Activated CD4-positive, alpha-beta T cell treated with anti-CD3 and anti-CD28 coated beads for 36 hours (primary cell): ENCODE measurements at regions of chr17 and their contacts with region 1.

Region 1: GRCh38 chr17:65055348-65056261 is 935 bp downstream of the GNA13 start:
- DNase-seq: peak; percentile 76
- ATAC-seq: peak; percentile 55
- H3K4me3 Mint-ChIP-seq: peak overlapping the region; percentile 93
- H3K27ac Mint-ChIP-seq: peak overlapping the region; percentile 94
- H3K4me1 Mint-ChIP-seq: peaks cover 43% of the 10 kb centered on the region
- H3K27me3 Mint-ChIP-seq: no peaks in the 10 kb centered on the region

Region 2: GRCh38 chr17:63988741-63989621 is 1066.6 kb before region 1 on chr17:
- CTCF ChIA-PET with region 1: no interaction called
- POLR2A ChIA-PET with region 1: no interaction called
- intact Hi-C with region 1: no loop called
- DNase-seq: no peak
- ATAC-seq: no peak
- H3K4me3 Mint-ChIP-seq: no peak overlapping the region
- H3K27ac Mint-ChIP-seq: no peak overlapping the region
- H3K4me1 Mint-ChIP-seq: peaks cover 44% of the 10 kb centered on the region
- H3K27me3 Mint-ChIP-seq: no peaks in the 10 kb centered on the region

Region 3: GRCh38 chr17:64661976-64662773 is 393.4 kb before region 1 on chr17 and contains the start of gene SMURF2:
- CTCF ChIA-PET with region 1: no interaction called
- POLR2A ChIA-PET with region 1: no interaction called
- intact Hi-C with region 1: loop called in 1 of 2 experiments (anchors 1 kb)
- DNase-seq: peak; percentile 89
- ATAC-seq: peak; percentile 82
- H3K4me3 Mint-ChIP-seq: peak within 1 kb of the TSS; percentile 98
- H3K27ac Mint-ChIP-seq: peak within 1 kb of the TSS; percentile 92
- H3K4me1 Mint-ChIP-seq: peaks cover 27% of the 10 kb centered on the region
- H3K27me3 Mint-ChIP-seq: no peaks in the 10 kb centered on the region
- total RNA-seq, gene SMURF2: 13.9 to 15.0 TPM

Region 4: DNA sequence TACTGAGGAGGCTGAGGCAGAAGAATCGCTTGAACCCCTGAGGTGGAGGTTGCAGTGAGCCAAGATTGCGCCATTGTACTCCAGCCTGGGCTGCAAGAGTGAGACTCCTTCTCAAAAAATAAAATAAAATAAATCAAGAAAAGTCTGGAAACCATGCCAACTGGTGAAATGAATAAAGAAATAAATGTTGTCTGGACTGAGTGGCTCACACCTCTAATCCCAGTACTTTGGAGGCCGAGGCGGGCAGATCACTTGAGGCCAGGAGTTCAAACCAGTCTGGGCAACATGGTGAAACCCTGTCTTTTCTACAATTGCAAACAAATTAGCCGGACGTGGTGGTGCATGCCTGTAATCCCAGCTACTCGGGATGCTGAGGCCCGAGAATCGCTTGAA is 135.6 kb before region 1 on chr17:
- CTCF ChIA-PET with region 1: no interaction called
- POLR2A ChIA-PET with region 1: no interaction called
- intact Hi-C with region 1: loop called (anchors 2 kb)
- DNase-seq: no peak
- ATAC-seq: no peak
- H3K4me3 Mint-ChIP-seq: peak overlapping the region; percentile 73
- H3K27ac Mint-ChIP-seq: peak overlapping the region; percentile 70
- H3K4me1 Mint-ChIP-seq: peaks cover 7% of the 10 kb centered on the region
- H3K27me3 Mint-ChIP-seq: no peaks in the 10 kb centered on the region

Region 5: DNA sequence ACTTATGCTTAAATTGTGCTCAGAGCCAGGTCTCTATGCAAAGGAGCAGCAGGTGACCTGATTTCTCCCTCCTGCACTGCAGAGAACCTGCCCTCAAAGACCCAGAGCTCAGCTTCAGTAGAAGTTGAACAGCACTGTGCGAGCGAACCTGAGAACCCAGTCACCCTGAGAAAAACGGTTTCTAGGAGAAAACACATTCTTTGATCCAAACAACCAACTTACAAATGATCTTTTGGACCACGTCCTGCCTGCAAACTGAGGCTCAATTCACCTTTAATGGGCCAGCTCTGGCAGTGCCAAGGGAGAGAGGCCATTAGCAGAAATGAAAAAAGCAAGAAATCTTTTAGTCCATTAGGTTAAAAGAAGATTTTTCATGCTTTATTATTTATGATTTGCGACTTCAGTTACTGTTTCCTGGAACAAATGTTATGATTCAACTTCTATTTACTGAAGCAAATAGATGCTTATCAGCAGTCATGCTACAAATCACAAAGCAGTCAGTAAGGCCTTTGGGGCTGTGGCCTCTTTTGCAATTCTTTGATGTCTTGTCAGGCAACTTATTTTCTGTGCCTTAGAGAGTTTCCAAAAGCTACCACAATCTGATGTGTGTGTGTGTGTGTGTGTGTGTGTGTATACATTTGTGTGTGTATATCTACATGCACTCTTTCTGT is 70.6 kb before region 1 on chr17:
- CTCF ChIA-PET with region 1: no interaction called
- POLR2A ChIA-PET with region 1: interaction called, 5 read pairs
- intact Hi-C with region 1: loop called (anchors 1 to 2 kb)
- DNase-seq: peak; percentile 65
- ATAC-seq: peak; percentile 44
- H3K4me3 Mint-ChIP-seq: peak overlapping the region; percentile 72
- H3K27ac Mint-ChIP-seq: peak overlapping the region; percentile 99
- H3K4me1 Mint-ChIP-seq: peaks cover 49% of the 10 kb centered on the region
- H3K27me3 Mint-ChIP-seq: no peaks in the 10 kb centered on the region

Region 6: DNA sequence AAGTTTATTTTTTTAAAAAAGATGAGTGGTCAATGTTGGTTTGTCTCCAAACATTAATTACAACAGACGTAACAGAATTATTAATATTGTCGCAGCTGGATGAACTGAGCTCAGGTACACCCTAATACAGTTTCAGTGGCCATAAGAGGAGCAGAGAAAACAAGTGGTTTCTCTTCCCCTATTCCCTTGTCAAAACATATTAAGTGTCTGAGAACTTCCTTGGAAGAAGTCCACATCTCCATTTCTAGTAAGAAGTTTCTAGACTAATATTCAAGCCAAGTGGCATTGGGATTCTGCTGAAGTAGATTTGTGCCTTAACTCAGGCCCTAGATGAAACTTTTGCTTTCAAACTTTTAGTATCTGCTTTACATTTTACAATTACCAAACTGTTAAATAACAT is 46.7 kb before region 1 on chr17:
- CTCF ChIA-PET with region 1: no interaction called
- POLR2A ChIA-PET with region 1: no interaction called
- intact Hi-C with region 1: no loop called
- DNase-seq: no peak
- ATAC-seq: no peak
- H3K4me3 Mint-ChIP-seq: no peak overlapping the region
- H3K27ac Mint-ChIP-seq: no peak overlapping the region
- H3K4me1 Mint-ChIP-seq: peaks cover 37% of the 10 kb centered on the region
- H3K27me3 Mint-ChIP-seq: no peaks in the 10 kb centered on the region

Region 7: GRCh38 chr17:65039336-65039988 is 16.1 kb before region 1 on chr17:
- CTCF ChIA-PET with region 1: interaction called, 9 read pairs
- POLR2A ChIA-PET with region 1: interaction called, 4 read pairs
- intact Hi-C with region 1: loop called (anchors 1 to 2 kb)
- DNase-seq: peak; percentile 65
- ATAC-seq: peak; percentile 90
- H3K4me3 Mint-ChIP-seq: peak overlapping the region; percentile 54
- H3K27ac Mint-ChIP-seq: peak overlapping the region; percentile 99
- H3K4me1 Mint-ChIP-seq: peaks cover 84% of the 10 kb centered on the region
- H3K27me3 Mint-ChIP-seq: no peaks in the 10 kb centered on the region

Region 8: GRCh38 chr17:65122836-65123756 is 67.5 kb after region 1 on chr17:
- CTCF ChIA-PET with region 1: no interaction called
- POLR2A ChIA-PET with region 1: no interaction called
- intact Hi-C with region 1: loop called (anchors 1 to 5 kb)
- DNase-seq: peak; percentile 89
- ATAC-seq: peak; percentile 69
- H3K4me3 Mint-ChIP-seq: peak overlapping the region; percentile 70
- H3K27ac Mint-ChIP-seq: peak overlapping the region; percentile 98
- H3K4me1 Mint-ChIP-seq: peaks cover 22% of the 10 kb centered on the region
- H3K27me3 Mint-ChIP-seq: peaks cover 6% of the 10 kb centered on the region

Region 9: DNA sequence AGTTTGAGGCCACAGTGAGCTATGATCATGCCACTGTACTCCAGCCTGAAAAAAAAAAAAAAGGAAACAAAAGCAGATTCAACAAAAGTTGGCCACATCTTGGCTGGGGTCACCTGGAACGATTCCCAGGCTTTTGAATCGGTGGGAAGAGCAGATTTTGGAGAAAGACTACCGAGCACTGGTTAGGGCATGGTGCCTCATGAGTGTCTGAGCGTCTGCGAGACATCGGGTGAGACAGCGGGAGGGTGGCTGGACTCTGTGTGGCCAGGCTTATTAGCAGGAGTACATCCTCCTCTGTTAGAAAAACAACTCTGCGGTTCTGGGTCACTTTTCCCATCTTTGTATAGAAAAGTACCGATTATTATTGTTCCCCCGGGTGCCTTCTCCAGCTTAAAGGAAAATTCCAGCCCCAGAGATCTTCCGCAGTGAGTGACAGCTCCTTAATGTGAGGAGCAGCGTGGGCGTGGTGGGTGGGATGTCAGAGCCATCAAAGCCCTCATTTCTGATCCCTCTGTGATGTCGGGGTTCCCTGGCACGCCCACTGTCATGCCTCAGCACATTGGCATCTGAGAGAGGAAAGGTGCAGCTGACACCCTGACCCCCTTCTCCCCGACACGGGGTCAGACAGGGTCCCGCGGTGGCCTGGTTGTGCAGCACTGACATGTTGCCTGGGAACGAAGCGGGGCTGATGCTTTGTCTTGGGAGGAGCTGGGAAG is 88.4 kb after region 1 on chr17:
- CTCF ChIA-PET with region 1: no interaction called
- POLR2A ChIA-PET with region 1: no interaction called
- intact Hi-C with region 1: no loop called
- DNase-seq: no peak
- ATAC-seq: no peak
- H3K4me3 Mint-ChIP-seq: no peak overlapping the region
- H3K27ac Mint-ChIP-seq: no peak overlapping the region
- H3K4me1 Mint-ChIP-seq: no peaks in the 10 kb centered on the region
- H3K27me3 Mint-ChIP-seq: peaks cover 6% of the 10 kb centered on the region

Region 10: DNA sequence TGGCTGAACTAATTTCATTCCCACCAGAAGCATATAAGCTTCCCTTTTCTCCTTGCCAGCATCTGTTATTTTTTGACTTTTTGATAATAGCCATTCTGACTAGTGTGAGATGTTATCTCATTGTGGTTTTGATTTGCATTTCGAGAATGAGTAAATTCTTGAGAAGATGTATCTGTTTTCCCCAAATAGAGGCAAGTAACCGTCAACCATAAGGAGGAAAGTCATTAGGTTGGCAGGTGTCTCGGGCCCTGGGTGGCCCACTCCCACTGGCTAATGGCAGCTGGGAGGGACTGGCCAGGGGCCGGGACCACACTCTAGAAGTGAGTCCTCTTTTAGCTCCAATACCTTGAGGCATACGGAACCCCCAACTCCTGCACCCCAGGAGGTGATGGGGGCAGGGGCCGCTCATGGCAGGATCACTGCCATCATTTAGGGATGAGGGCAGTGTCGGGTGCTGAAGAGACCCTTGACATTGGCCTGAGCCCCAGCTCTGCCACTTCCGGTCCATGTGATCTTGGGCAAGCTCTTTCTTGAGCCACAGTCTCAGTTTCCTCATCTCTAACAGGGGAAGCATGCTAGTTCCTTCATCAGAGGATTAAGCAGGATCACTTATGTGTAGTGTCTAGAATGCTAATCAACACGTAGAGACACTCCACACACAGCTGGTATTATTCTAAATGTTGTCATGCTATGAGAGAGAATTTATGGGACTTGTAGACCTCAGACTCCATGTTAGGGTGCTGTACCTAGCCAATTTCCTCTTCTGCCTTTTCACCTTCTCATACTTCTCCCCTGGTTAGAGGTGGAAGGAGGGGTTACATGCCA is 125.8 kb after region 1 on chr17:
- CTCF ChIA-PET with region 1: no interaction called
- POLR2A ChIA-PET with region 1: no interaction called
- intact Hi-C with region 1: loop called in 1 of 2 experiments (anchors 1 kb)
- DNase-seq: peak; percentile 71
- ATAC-seq: peak; percentile 77
- H3K4me3 Mint-ChIP-seq: no peak overlapping the region
- H3K27ac Mint-ChIP-seq: peak overlapping the region; percentile 75
- H3K4me1 Mint-ChIP-seq: peaks cover 54% of the 10 kb centered on the region
- H3K27me3 Mint-ChIP-seq: peaks cover 9% of the 10 kb centered on the region

Region 11: GRCh38 chr17:65243802-65244220 is 188.2 kb after region 1 on chr17:
- CTCF ChIA-PET with region 1: no interaction called
- POLR2A ChIA-PET with region 1: no interaction called
- intact Hi-C with region 1: no loop called
- DNase-seq: peak; percentile 36
- ATAC-seq: peak; percentile 63
- H3K4me3 Mint-ChIP-seq: no peak overlapping the region
- H3K27ac Mint-ChIP-seq: no peak overlapping the region
- H3K4me1 Mint-ChIP-seq: peaks cover 6% of the 10 kb centered on the region
- H3K27me3 Mint-ChIP-seq: peaks cover 11% of the 10 kb centered on the region